ENCODE measurements at regions of chr15 and their contacts with region 1.

Region 1: GRCh38 chr15:43903864-43904290 is 77.1 kb downstream of the WDR76 start:
- DNase-seq: peak; percentile 59
- H3K4me3 Mint-ChIP-seq: no peak overlapping the region
- H3K27ac Mint-ChIP-seq: no peak overlapping the region
- H3K4me1 Mint-ChIP-seq: peaks cover 2% of the 10 kb centered on the region
- H3K27me3 Mint-ChIP-seq: no peaks in the 10 kb centered on the region

Region 2: GRCh38 chr15:43886558-43886957 is 17.3 kb before region 1 on chr15:
- CTCF ChIA-PET with region 1: interaction called, 11 read pairs
- POLR2A ChIA-PET with region 1: no interaction called
- intact Hi-C with region 1: no loop called
- DNase-seq: no peak
- H3K4me3 Mint-ChIP-seq: no peak overlapping the region
- H3K27ac Mint-ChIP-seq: peak overlapping the region; percentile 11
- H3K4me1 Mint-ChIP-seq: no peaks in the 10 kb centered on the region
- H3K27me3 Mint-ChIP-seq: no peaks in the 10 kb centered on the region

Region 3: DNA sequence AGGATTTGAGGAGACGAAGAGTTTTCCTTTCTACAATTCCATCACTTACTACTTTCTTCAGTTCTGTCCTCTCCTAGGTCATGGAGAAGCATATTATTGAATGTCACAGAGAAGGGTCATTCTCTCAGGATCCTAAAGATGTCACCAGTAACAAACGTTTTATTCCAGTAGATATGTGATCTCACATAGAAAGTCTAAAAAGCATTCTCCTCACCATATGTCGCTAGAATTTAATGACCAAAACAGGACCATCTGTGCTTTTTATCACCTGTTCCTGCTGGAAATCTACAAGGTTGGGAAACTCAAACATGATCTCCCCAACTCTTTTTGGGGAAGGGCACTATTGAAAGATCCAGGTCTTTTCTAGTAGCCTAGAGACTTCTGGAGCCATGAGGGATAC is 315.2 kb after region 1 on chr15:
- CTCF ChIA-PET with region 1: no interaction called
- POLR2A ChIA-PET with region 1: no interaction called
- intact Hi-C with region 1: loop called (anchors 1 kb)
- DNase-seq: no peak
- H3K4me3 Mint-ChIP-seq: no peak overlapping the region
- H3K27ac Mint-ChIP-seq: no peak overlapping the region
- H3K4me1 Mint-ChIP-seq: peaks cover 3% of the 10 kb centered on the region
- H3K27me3 Mint-ChIP-seq: peaks cover 23% of the 10 kb centered on the region